ENCODE measurements at regions of chr12 and their contacts with region 1.

Region 1: DNA sequence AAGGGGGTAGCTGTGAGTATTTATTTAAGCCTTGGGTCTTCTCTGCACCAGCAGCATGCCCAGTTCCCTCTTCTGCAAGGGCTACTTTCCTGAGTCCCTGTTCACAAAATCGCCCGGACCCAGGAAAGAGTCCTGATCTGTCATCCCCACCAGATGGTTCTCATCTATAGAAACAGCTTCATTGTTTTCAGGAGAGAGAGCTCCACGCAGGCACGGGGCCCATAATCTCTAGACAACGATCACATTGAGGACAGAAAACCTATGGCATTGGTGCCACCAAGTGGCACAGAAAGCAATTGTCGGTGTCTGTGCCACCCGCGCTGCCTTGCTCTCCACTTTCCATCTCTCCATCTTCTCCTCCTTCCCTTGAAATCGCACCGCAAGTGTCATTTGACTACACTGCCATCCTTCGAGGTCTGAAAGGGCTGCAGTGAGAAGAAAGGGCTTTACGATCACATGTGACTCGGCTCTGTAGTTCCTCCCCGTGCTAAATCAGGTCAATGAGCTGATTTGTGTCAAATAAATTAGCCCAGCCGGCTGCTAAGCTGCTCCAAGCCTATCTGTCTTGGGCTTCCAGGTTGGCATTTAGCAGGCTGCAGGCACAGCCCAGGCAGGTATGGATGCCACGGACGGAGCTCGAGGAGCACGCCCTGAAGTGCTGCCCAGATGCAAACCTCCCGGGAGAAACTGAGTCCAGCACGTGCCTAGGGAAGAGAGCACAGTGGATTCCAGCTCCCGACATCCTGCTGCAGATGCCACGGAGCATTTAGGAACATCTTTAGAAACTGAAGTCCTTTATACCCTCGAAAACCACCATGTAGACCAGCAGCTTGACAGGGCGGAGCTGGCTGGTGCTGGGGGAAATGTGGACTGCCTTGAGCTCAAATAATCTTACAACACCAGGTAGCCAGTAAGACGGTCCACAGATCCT is 28.8 kb downstream of the SPRING1 start:
- DNase-seq: peak; percentile 42
- ATAC-seq: peak; percentile 89
- H3K4me3 Mint-ChIP-seq: peak overlapping the region; percentile 70
- H3K27ac Mint-ChIP-seq: no peak overlapping the region
- H3K4me1 Mint-ChIP-seq: peaks cover 25% of the 10 kb centered on the region
- H3K27me3 Mint-ChIP-seq: peaks cover 2% of the 10 kb centered on the region
- CTCF ChIP-seq: peak; percentile 53

Region 2: DNA sequence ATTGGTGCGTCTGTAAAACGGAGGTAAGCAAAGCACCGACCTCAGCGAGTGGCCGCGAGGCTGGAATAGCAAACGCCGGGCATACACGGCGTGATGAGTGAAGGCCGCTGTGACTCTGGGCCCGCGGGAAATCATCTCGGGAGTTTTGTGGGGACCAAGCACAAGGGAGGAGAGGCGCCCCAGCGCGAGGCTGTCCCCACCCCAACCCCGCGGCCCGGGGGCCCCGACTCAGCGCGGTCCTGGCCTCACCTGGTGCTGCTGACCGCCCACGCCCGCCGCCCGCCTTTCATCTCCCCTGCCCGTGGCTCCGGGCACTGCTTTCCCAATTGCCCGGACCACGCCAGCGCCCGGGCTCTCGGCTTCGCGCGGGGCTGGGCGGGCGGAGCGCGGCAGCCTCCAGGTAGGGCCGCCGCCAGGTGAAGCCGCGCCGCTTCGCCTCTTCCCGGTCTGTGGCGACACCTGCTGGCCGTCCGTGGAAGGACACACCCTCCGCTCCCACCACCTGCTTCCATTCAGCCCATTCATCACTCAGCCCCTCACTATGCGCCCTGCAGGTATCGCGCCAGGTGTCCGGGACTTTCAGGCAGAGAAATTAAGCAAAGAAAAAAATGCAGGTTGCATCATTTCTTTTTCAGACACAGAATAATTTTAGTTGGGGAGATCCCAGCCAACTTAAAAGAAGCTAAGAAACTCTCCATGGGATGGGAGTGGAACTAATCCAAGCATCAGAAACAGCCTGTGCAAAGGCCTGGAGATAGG is 792.0 kb before region 1 on chr12:
- CTCF ChIA-PET with region 1: interaction called, 3 read pairs
- POLR2A ChIA-PET with region 1: no interaction called
- intact Hi-C with region 1: loop called (anchors 2 kb)
- DNase-seq: peak; percentile 64
- ATAC-seq: peak; percentile 58
- H3K4me3 Mint-ChIP-seq: peak overlapping the region; percentile 38
- H3K27ac Mint-ChIP-seq: no peak overlapping the region
- H3K4me1 Mint-ChIP-seq: peaks cover 2% of the 10 kb centered on the region
- H3K27me3 Mint-ChIP-seq: peaks cover 50% of the 10 kb centered on the region
- CTCF ChIP-seq: peak; percentile 80

Region 3: GRCh38 chr12:115988625-115989563 is 720.2 kb before region 1 on chr12:
- CTCF ChIA-PET with region 1: interaction called, 14 read pairs
- POLR2A ChIA-PET with region 1: no interaction called
- intact Hi-C with region 1: no loop called
- DNase-seq: no peak
- ATAC-seq: peak; percentile 85
- H3K4me3 Mint-ChIP-seq: peak overlapping the region; percentile 0
- H3K27ac Mint-ChIP-seq: peak overlapping the region; percentile 57
- H3K4me1 Mint-ChIP-seq: peaks cover 36% of the 10 kb centered on the region
- H3K27me3 Mint-ChIP-seq: no peaks in the 10 kb centered on the region
- CTCF ChIP-seq: no peak

Region 4: GRCh38 chr12:116015525-116015924 is 693.6 kb before region 1 on chr12:
- CTCF ChIA-PET with region 1: interaction called, 19 read pairs
- POLR2A ChIA-PET with region 1: no interaction called
- intact Hi-C with region 1: loop called (anchors 1 kb)
- DNase-seq: no peak
- ATAC-seq: peak; percentile 67
- H3K4me3 Mint-ChIP-seq: no peak overlapping the region
- H3K27ac Mint-ChIP-seq: no peak overlapping the region
- H3K4me1 Mint-ChIP-seq: no peaks in the 10 kb centered on the region
- H3K27me3 Mint-ChIP-seq: no peaks in the 10 kb centered on the region
- CTCF ChIP-seq: no peak

Region 5: GRCh38 chr12:116142936-116143898 is 565.9 kb before region 1 on chr12:
- CTCF ChIA-PET with region 1: interaction called, 10 read pairs
- POLR2A ChIA-PET with region 1: no interaction called
- intact Hi-C with region 1: loop called (anchors 1 kb)
- DNase-seq: no peak
- ATAC-seq: peak; percentile 72
- H3K4me3 Mint-ChIP-seq: peak overlapping the region; percentile 50
- H3K27ac Mint-ChIP-seq: peak overlapping the region; percentile 21
- H3K4me1 Mint-ChIP-seq: peaks cover 55% of the 10 kb centered on the region
- H3K27me3 Mint-ChIP-seq: no peaks in the 10 kb centered on the region
- CTCF ChIP-seq: no peak

Region 6: GRCh38 chr12:116665666-116666304 is 43.3 kb before region 1 on chr12:
- CTCF ChIA-PET with region 1: no interaction called
- POLR2A ChIA-PET with region 1: no interaction called
- intact Hi-C with region 1: no loop called
- DNase-seq: no peak
- ATAC-seq: no peak
- H3K4me3 Mint-ChIP-seq: no peak overlapping the region
- H3K27ac Mint-ChIP-seq: no peak overlapping the region
- H3K4me1 Mint-ChIP-seq: peaks cover 1% of the 10 kb centered on the region
- H3K27me3 Mint-ChIP-seq: peaks cover 10% of the 10 kb centered on the region
- CTCF ChIP-seq: no peak

Region 7: GRCh38 chr12:116880817-116881324 is 171.8 kb after region 1 on chr12:
- CTCF ChIA-PET with region 1: interaction called, 26 read pairs
- POLR2A ChIA-PET with region 1: interaction called, 3 read pairs
- intact Hi-C with region 1: no loop called
- DNase-seq: peak; percentile 53
- ATAC-seq: peak; percentile 80
- H3K4me3 Mint-ChIP-seq: peak overlapping the region; percentile 85
- H3K27ac Mint-ChIP-seq: peak overlapping the region; percentile 77
- H3K4me1 Mint-ChIP-seq: peaks cover 45% of the 10 kb centered on the region
- H3K27me3 Mint-ChIP-seq: peaks cover 35% of the 10 kb centered on the region
- CTCF ChIP-seq: no peak

Measured in activated B cell treated with CpG ODN at 0.5 μM for 24 hours (primary cell).